ENCODE measurements at regions of chr9 and their contacts with region 1.

Region 1: DNA sequence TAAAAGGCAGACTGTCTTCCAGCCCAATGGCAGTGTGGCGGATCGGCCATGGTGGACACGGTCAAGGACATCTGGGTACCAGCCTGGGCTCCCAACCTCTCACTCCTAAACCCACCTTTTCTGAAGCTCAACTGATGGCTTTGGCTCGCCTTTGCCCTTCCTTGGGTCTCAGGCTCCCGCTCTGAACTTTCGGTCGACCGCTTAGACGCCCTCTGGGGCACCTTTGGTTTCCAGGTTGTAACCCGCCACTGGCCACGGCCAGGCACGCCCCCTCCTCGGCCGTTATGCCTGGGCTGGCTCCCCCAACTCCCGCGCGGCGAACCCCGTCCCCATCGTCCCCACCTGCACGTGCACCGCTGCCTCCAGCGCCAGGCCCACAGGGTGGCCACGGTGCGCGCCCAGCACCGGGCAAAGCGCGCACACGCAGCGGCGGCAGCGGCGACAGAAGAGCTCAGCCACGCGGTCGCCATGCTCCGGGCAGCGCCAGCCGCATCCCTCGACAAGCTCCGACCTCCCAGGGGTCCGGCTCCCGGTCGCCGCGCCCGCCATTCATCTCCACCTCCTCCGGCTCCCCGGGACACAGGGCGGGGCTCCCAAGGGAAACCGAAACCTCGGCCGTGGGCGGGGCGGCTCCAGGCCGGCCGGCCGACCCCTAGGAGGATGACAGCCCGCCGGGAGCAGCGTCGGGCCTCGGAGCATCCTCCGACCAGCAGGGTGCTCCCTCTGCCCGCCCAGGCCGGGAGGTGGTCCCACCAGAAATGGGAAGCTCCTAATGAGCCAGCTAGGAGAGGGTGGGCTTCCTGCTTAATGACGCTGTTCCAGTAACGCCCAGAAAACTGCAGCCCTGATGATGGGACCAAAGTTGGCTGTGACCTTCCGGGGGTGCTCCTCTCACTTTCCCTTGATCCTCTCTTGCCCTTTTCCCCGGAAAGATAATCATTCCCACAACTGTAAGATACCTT is at the start of gene TRIM14:
- DNase-seq: peak; percentile 84
- CTCF ChIP-seq: peak; percentile 32

Region 2: DNA sequence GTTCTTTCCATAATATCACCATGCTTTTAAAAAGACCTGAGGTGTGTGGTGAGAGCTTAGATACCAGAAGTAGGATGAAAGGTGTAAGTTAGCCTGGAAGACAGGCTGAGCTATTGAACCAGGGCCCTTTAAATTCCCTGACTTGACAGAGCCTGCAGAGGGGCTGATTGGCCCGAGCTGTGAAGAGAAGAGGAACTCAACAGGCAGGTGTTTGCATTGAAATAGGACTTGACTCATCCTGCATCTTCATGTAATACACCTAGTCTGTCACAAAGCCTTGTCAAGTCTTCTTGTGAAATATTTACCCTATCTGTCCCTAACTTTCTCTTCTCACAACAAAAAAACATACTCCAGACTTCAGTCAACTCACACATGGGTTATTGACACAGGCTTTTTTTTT is 152.4 kb before region 1 on chr9:
- CTCF ChIA-PET with region 1: no interaction called
- POLR2A ChIA-PET with region 1: no interaction called
- DNase-seq: no peak
- CTCF ChIP-seq: no peak

Region 3: GRCh38 chr9:98108531-98109031 is 10.3 kb before region 1 on chr9:
- CTCF ChIA-PET with region 1: interaction called, 36 read pairs
- POLR2A ChIA-PET with region 1: interaction called, 3 read pairs
- DNase-seq: peak; percentile 50
- CTCF ChIP-seq: no peak

Region 4: DNA sequence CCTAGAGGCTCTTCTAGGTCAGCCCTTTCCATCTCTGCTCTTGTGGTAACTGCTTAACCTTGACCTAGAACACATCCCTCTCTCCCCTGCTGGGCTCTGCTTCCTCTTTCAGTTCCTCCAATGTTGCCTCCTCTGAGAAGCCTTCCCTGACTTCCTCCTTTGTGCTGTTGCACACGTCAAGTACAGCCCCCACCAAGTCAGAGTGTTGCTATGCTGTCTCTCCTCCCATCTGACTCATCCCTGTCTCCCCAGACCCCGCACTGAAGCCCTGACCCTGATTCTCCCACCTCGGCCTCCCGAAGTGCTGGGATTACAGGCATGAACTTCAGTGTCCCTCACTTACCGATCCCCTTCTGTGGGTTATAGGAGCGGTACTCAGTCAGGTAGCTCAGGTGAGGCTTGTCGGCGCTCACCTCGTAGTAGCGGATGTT is 10.5 kb after region 1 on chr9:
- CTCF ChIA-PET with region 1: interaction called, 18 read pairs
- POLR2A ChIA-PET with region 1: no interaction called
- DNase-seq: peak; percentile 72
- CTCF ChIP-seq: no peak

Region 5: DNA sequence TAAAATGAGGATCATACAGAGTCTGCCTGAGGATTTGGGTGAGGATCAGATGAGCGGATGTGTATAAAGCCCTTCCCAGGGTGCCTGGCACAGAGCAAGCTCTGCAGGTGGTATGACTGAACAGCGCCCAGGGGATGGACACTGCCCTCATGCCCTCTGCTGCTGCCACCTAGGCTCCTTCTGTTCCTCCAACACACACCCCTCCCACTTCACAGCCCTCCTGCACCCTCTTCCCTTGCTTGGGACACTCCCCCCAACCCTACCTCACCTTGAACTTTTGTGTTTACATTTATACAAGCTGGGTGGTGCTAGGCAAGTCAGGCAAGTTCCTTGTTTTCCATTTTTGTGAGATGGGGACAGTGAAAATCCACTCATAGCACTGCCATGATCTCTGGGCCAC is 92.3 kb after region 1 on chr9:
- CTCF ChIA-PET with region 1: no interaction called
- POLR2A ChIA-PET with region 1: no interaction called
- DNase-seq: no peak
- CTCF ChIP-seq: no peak

Region 6: DNA sequence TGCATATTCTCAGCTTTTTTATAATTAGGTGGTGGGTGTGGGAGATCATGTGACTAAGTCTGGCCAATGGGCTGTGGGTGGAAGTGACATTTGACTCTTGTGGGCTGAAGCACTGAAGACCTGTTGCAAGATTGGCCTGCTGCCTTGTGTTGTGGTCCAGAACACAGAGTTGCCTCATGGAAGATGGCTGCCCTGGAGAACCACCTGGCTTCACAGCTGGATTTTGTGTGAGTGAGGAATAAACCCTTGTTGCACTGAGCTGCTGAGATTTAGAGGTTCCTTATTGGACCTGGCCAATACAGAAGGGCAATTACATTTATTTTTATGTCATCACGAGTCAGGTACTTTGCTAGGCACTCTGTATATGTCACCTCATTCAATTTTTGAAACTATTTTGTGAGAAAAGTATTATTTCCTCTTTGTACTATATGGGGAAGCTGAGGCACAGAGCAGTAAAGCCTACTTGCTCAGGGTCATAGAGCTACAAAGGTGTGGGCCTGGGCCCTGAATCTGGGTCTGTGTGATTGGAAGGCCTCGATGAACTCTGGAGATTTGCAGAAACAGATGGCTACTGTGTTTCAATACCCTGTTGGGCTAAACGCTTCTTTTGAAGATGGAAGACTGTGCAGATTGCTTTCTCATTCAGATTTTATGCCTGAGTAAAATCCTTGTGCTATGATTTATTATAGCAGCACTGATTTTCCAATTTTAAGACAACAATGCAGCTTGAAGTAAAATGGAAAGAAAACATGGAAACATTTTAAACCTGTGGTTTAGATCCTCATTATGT is 207.7 kb after region 1 on chr9:
- CTCF ChIA-PET with region 1: no interaction called
- POLR2A ChIA-PET with region 1: no interaction called
- DNase-seq: no peak
- CTCF ChIP-seq: no peak